Heart right ventricle (tissue), 16 donors: ENCODE measurements at regions of chr9 and their contacts with region 1.

Region 1: GRCh38 chr9:107650321-107650720 is 160.8 kb upstream of the KLF4 start:
- DNase-seq: no peak
- ATAC-seq: no peak
- H3K4me3 ChIP-seq: no peak overlapping the region
- H3K27ac ChIP-seq: no peak overlapping the region
- H3K4me1 ChIP-seq: peaks cover 0 to 21% (median 10%) of the 10 kb centered on the region in 9 donors
- H3K27me3 ChIP-seq: peaks cover 0 to 3% (median 0%) of the 10 kb centered on the region in 7 donors
- CTCF ChIP-seq: no peak

Region 2: DNA sequence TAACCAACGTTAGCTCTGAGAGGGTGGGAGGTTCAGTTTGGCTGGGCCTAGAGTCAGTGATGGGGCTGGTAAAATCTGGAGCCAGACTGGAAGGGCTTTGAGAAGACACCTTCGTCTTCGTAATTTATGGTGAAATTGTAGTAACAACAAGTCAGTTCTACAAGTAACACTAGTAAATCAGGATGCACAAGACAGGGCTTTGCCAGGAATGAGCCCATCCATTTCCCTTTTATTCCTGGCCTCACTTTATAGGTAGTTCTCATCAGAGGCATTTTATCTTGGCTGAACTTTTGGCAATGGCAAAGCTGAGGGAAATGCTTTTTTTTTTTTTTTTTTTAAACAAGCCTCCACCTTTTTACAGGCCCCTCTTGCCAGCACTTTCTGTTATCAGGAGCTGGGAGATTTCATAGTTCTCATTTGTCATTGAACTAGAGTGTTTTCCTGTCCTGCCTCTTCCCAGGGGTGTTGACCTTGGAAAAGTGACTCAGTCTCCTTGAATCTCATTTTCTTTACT is 50.2 kb before region 1 on chr9:
- intact Hi-C with region 1: loop called in 1 of 10 experiments (anchors 10 kb)
- DNase-seq: peak in 1 of 2 donors; percentile 66
- ATAC-seq: peak; percentile 80 to 96 (median 90)
- H3K4me3 ChIP-seq: no peak overlapping the region
- H3K27ac ChIP-seq: peak overlapping the region in 9 of 10 donors; percentile 42 to 88 (median 60)
- H3K4me1 ChIP-seq: peaks cover 6 to 41% (median 13%) of the 10 kb centered on the region in 9 donors
- H3K27me3 ChIP-seq: no peaks in the 10 kb centered on the region
- CTCF ChIP-seq: no peak

Region 3: GRCh38 chr9:108053555-108054061 is 403.3 kb after region 1 on chr9:
- intact Hi-C with region 1: loop called in 2 of 10 experiments (anchors 10 kb)
- DNase-seq: peak; percentile 54 to 61
- ATAC-seq: peak; percentile 51 to 78 (median 66)
- H3K4me3 ChIP-seq: peak overlapping the region in 3 of 10 donors; percentile 8 to 10 (median 8)
- H3K27ac ChIP-seq: peak overlapping the region in 7 of 10 donors; percentile 30 to 54 (median 46)
- H3K4me1 ChIP-seq: peaks cover 5 to 55% (median 15%) of the 10 kb centered on the region in 9 donors
- H3K27me3 ChIP-seq: peaks cover 0 to 6% (median 0%) of the 10 kb centered on the region in 7 donors
- CTCF ChIP-seq: no peak